BJ (cell line): ENCODE measurements at regions of chr11 and their contacts with region 1.

Region 1: DNA sequence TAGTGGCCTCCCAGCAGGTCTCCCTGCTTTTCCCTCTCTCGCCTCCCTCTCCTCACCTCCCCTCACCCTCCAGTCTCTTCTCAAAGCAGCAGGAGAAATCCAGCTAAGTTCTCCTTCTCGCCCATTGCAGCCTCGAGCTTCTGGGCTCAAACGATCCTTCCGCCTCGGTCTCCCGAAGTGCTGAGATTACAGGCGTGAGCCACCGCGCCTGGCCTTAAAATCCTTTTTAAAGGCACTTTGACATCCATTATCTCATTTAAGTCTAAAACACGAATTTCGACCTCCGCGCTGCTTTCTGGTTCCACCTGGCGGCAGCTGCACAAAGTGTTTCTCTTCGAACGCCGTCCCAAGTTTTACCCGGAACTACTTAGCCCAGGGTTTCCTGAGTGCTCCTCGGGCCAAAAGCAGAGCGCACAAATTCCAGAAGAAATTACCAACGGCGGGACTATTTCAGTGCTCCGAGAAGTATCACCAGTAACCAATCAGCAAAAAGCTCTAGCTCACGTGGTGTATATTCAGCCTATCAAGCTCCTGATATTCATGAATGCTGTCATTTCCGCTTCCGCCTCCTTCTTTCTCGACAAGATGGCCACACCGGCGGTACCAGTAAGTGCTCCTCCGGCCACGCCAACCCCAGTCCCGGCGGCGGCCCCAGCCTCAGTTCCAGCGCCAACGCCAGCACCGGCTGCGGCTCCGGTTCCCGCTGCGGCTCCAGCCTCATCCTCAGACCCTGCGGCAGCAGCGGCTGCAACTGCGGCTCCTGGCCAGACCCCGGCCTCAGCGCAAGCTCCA is at the start of gene EIF3F:
- DNase-seq: peak; percentile 99
- H3K4me3 ChIP-seq: peak within 1 kb of the TSS; percentile 78
- H3K27me3 ChIP-seq: no peaks in the 10 kb centered on the region
- CTCF ChIP-seq: peak; percentile 80
- polyA plus RNA-seq, gene EIF3F: 181 and 218 TPM in 2 replicates

Region 2: DNA sequence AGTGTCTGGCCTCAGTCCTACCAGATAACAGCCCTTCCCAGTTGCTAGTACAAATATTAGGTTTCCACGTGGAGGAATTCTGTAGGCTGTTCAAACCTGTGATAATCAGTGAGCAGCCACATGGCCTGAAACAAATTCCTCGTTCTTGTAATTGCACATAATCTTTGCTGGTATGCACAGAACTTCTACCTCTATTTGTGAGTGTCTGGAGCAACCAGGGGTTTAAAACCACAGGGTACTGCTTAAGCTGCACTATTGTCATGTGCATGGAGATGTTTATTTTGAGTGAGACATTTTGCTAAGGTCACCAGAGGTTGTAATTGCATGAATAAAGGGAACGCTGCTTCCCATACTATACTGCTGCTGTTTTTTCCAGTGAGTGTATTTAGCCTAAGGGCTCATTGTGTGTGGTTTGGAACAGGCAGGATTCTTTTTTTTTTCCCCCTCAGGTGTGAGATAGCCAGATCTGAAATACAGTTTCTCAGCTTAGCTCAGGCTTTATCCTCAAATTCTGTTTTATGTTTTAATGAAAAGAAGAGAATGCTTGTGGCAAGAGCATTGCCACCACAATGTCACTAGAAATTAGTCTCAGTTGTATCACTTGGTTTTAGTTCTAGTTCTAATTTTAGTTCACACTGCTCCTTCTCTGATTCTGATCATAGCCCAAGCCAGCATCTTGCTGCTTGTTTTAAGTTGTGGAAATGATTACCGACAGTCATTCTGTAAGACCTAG is 374.1 kb before region 1 on chr11:
- CTCF ChIA-PET with region 1: no interaction called
- POLR2A ChIA-PET with region 1: no interaction called
- DNase-seq: no peak
- H3K4me3 ChIP-seq: no peak overlapping the region
- H3K27me3 ChIP-seq: no peaks in the 10 kb centered on the region
- CTCF ChIP-seq: no peak

Region 3: DNA sequence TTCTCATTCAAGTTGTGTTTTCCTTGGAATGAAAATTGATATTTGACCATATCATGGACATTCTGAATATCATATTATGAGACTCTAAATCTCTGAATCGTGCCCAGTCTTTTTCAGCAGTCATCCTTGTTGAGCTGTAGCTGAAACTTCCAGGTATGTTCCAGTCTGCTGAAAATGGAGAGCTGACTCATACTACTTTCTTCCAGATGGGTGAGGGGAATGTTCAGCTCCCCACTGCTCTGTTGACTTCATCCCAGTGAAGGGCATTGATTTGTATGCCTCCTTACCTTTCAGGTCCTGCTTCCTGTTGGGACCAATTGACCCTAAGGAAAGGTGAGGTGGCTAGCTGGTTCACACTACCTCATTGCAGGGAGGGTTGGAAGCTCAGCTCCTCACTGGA is 193.7 kb before region 1 on chr11:
- CTCF ChIA-PET with region 1: no interaction called
- POLR2A ChIA-PET with region 1: no interaction called
- DNase-seq: no peak
- H3K4me3 ChIP-seq: no peak overlapping the region
- H3K27me3 ChIP-seq: no peaks in the 10 kb centered on the region
- CTCF ChIP-seq: no peak

Region 4: GRCh38 chr11:7892840-7893254 is 94.1 kb before region 1 on chr11:
- CTCF ChIA-PET with region 1: interaction called, 129 read pairs
- POLR2A ChIA-PET with region 1: interaction called, 4 read pairs
- DNase-seq: no peak
- H3K4me3 ChIP-seq: no peak overlapping the region
- H3K27me3 ChIP-seq: no peaks in the 10 kb centered on the region
- CTCF ChIP-seq: peak; percentile 65

Region 5: GRCh38 chr11:7910286-7910788 is 76.6 kb before region 1 on chr11:
- CTCF ChIA-PET with region 1: interaction called, 196 read pairs
- POLR2A ChIA-PET with region 1: interaction called, 10 read pairs
- DNase-seq: no peak
- H3K4me3 ChIP-seq: no peak overlapping the region
- H3K27me3 ChIP-seq: no peaks in the 10 kb centered on the region
- CTCF ChIP-seq: no peak

Region 6: GRCh38 chr11:7965386-7965785 is 21.6 kb before region 1 on chr11 and contains the start of gene NLRP10:
- CTCF ChIA-PET with region 1: interaction called, 16 read pairs
- POLR2A ChIA-PET with region 1: interaction called, 5 read pairs
- DNase-seq: peak; percentile 86
- H3K4me3 ChIP-seq: no peak within 1 kb of the TSS
- H3K27me3 ChIP-seq: no peaks in the 10 kb centered on the region
- CTCF ChIP-seq: no peak
- polyA plus RNA-seq, gene NLRP10: 3.9 and 5.1 TPM in 2 replicates

Region 7: DNA sequence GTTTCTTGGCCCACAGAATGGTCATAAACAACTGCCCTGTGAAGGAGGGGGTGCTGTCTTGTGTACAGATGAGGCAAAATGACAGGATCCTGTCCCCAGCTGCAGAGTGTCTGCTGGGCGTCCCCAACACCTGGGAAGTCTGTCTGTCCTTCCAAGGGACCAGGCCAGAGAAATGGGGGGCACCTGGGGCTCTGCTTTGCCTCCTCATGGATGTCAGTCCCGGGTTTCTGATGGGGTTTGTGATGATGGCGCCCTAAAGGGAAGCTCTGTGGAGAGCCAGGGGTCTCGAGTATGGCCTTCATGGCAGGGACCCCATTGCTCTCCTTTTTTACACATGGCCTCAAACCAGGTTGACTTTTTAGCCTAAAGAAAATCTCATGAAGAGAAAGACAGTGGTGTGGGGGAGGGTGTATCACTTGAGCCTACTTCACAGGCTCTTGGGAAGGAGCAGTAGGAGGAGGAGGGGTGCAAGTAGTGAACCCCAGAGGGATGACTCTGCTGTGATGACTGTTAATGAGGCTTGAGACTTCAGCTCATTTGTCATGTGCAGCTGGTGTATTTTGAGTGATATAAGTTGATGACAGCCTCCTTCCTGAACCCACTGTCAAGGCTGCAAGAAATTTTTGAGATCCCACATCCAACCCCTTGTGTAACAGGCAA is 53.4 kb after region 1 on chr11:
- CTCF ChIA-PET with region 1: no interaction called
- POLR2A ChIA-PET with region 1: no interaction called
- DNase-seq: no peak
- H3K4me3 ChIP-seq: no peak overlapping the region
- H3K27me3 ChIP-seq: no peaks in the 10 kb centered on the region
- CTCF ChIP-seq: no peak